ENCODE measurements at regions of chr4 and their contacts with region 1.

Region 1: GRCh38 chr4:169659716-169660670 is 39.6 kb downstream of the CLCN3 start:
- DNase-seq: peak; percentile 97
- H3K4me3 Mint-ChIP-seq: peak overlapping the region; percentile 87
- H3K27ac Mint-ChIP-seq: peak overlapping the region; percentile 95
- H3K4me1 Mint-ChIP-seq: peaks cover 18% of the 10 kb centered on the region
- H3K27me3 Mint-ChIP-seq: no peaks in the 10 kb centered on the region
- CTCF ChIP-seq: no peak

Region 2: DNA sequence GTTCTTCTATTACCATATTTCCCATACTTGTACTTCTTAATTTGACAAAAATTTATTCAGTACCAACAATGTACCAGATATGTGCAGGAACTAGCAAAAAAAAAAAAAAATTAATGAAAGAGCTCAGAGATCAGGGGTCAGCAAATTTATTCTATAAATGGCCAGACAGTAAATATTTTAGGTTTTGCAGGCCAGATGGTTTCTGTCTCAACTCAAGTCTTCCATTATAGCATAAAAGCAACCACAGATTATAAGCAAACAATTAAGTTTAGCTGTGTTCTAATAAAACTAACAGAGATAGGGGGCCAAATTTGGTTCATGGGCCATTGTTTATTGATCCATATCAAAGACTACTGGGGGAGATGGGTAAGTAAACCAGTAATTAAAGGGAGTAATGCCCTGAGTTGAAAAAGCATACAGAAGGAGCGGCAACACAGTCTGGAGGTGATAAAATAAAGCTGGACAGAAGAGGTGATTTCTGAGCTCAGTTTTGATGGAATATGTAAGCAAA is 66.9 kb before region 1 on chr4:
- CTCF ChIA-PET with region 1: no interaction called
- POLR2A ChIA-PET with region 1: no interaction called
- intact Hi-C with region 1: no loop called
- DNase-seq: no peak
- H3K4me3 Mint-ChIP-seq: no peak overlapping the region
- H3K27ac Mint-ChIP-seq: no peak overlapping the region
- H3K4me1 Mint-ChIP-seq: no peaks in the 10 kb centered on the region
- H3K27me3 Mint-ChIP-seq: no peaks in the 10 kb centered on the region
- CTCF ChIP-seq: no peak

Region 3: DNA sequence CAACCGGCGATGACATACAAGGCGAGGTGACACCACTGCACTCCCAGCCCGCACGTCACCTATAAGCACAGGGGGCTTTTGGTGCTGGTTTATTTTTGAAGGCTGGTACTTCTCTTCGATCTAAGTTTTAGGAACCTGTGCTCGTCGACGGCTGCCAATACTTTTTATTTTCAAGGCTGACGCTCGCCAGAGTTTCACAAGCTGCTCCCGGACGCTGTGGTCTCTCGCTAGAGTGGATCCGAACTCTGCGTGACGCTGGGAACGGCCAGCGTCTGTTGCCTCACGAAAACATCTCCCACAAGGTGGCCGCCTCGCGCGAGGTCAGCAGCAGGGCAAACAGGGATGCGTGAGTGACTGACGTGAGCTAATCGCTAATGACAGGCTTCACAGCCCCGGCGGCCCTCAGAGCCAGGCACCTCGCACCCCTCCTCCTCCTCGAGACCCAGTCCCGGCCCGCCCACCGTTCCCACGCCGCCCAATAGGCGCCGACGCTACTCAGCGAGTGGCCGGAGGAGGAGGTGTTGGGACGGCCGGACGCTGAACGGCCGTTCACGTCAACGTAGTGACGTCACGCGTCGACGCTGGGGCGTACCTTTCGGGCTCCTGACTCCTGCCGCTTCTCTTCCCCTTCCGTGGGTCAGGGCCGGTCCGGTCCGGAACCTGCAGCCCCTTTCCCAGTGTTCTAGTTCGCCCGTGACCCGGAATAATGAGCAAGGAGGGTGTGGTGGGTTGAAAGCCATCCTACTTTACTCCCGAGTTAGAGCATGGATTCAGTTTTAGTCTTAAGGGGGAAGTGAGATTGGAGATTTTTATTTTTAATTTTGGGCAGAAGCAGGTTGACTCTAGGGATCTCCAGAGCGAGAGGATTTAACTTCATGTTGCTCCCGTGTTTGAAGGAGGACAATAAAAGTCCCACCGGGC is 39.8 kb before region 1 on chr4 and contains the start of gene CLCN3:
- CTCF ChIA-PET with region 1: interaction called, 7 read pairs
- POLR2A ChIA-PET with region 1: interaction called, 303 read pairs
- intact Hi-C with region 1: loop called (anchors 1 kb)
- DNase-seq: peak; percentile 98
- H3K4me3 Mint-ChIP-seq: peak within 1 kb of the TSS; percentile 97
- H3K27ac Mint-ChIP-seq: peak within 1 kb of the TSS; percentile 98
- H3K4me1 Mint-ChIP-seq: peaks cover 29% of the 10 kb centered on the region
- H3K27me3 Mint-ChIP-seq: no peaks in the 10 kb centered on the region
- CTCF ChIP-seq: no peak
- total RNA-seq, gene CLCN3: 56.0 and 67.8 TPM in 2 replicates

Region 4: DNA sequence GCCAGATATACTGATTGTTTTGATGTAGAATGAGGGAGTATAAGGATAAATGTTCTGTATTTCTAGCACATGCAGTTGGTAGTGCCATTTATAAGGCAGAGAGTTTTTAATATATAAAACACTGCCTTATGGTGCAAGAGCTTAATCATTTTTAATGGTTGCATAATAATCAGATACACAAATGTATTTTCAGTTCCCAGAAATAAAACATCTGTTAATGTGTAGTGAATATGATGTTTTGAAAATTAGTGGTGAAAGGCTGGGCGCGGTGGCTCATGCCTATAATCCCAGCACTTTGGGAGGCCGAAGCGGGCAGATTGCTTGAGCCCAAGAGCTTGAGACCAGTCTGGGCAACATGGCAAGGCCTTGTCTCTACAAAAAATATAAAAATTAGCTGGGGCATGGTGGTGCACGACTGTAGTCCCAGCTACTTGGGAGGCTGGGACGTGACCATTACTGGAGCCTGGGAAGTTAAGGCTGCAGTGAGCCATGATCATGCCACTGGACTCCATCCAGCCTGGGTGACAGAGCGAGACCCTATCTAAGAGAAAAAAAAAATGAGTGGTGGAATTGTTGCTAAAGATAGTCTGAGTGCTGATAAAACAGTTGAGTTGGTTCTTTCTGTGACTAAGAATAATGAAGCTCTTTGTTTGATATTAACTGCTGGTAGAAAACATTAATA is 10.3 kb before region 1 on chr4:
- CTCF ChIA-PET with region 1: interaction called, 3 read pairs
- POLR2A ChIA-PET with region 1: interaction called, 23 read pairs
- intact Hi-C with region 1: no loop called
- DNase-seq: no peak
- H3K4me3 Mint-ChIP-seq: no peak overlapping the region
- H3K27ac Mint-ChIP-seq: no peak overlapping the region
- H3K4me1 Mint-ChIP-seq: peaks cover 9% of the 10 kb centered on the region
- H3K27me3 Mint-ChIP-seq: no peaks in the 10 kb centered on the region
- CTCF ChIP-seq: no peak

Region 5: GRCh38 chr4:169682372-169683047 is 22.5 kb after region 1 on chr4:
- CTCF ChIA-PET with region 1: interaction called, 3 read pairs
- POLR2A ChIA-PET with region 1: interaction called, 13 read pairs
- intact Hi-C with region 1: no loop called
- DNase-seq: peak; percentile 33
- H3K4me3 Mint-ChIP-seq: no peak overlapping the region
- H3K27ac Mint-ChIP-seq: no peak overlapping the region
- H3K4me1 Mint-ChIP-seq: no peaks in the 10 kb centered on the region
- H3K27me3 Mint-ChIP-seq: no peaks in the 10 kb centered on the region
- CTCF ChIP-seq: no peak